Cardiac septum (tissue), 1 donor: ENCODE measurements at regions of chr15 and their contacts with region 1.

Region 1: DNA sequence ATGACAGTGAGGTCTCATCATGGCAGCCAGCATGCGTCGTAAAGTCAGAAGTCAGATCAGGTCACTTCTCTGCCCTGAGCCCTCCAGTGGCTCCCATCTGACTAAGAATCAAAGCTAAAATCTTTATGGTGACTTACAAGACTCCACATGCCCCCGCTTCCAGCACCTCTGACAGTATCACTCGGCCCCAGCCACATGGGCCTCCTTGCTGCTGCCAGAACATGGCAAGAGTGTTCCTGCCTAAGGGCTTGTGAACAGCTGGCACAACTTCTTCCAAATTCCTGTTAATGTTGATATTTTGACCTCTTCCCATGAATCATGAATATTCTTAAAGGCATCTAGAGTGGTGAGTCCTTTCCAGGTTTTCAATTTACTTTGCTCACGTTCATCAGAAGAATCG is 20.5 kb downstream of the POLR2M start:
- DNase-seq: no peak

Region 2: GRCh38 chr15:57031605-57032004 is 695.4 kb before region 1 on chr15:
- intact Hi-C with region 1: no loop called
- DNase-seq: no peak

Region 3: DNA sequence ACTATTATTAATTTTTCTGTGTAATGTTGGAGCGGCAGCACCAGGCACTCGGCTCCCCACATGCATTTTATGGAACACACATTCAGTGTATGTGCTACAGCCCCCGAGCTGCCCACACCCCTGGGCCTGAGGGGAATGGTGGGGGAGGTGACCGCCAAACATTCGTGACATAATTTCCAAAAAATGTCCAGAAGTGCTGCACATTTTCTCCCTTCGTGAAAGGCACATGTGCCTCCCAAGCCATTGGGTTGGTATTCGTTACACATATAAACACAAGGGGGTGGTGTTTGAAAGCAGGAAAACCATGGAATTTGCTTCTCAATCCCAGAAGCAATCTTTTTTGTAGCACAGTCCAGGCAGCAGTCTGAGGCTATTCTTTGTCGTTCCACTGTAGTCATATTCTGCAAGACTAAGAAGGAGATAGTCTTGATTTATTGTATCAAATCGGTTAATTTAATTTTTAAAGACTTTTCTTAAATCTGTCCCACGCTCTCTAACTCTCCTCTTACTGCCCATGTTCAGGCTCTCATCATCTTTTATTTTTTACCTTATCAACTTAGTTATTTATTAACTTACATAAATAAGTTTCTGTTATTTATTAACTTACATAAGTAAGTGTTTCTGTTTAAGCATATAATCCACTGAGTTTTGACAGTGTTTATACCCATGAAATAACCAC is 59.7 kb before region 1 on chr15:
- intact Hi-C with region 1: loop called (anchors 5 kb)
- DNase-seq: no peak

Region 4: GRCh38 chr15:57743424-57743823 is 16.4 kb after region 1 on chr15:
- intact Hi-C with region 1: no loop called
- DNase-seq: no peak